MCF 10A (cell line): ENCODE measurements at regions of chr3 and their contacts with region 1.

Region 1: DNA sequence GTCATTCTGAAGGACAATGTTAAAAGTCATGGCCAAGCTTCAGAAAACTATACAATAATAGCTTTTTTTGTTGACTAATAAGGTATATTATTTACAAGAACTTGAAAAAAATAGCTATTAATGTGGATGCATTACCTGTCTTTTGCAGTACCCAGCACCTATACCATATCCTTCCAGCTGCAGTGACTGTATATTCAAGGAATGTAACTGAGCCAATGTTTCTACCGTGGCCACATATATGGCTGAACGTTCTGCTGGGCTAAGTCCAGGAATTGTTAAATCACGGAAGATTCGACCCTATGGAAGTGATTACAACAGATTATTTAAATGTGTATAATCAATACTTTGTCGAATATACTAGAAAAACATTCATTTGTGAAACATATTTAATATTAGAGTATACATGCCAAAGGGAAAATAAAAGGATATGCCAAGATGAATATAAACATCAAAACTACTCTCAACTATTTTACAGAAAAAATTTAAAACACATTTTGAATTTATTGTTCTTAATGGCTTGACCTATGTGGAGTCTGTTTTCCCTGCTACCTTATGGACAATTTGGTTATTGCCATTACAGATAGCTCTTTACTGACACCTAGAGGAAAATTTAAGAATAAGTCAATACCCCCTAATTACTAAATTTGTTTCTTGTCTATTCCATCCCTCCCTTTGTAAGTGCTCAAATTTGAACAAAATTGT is 17.6 kb downstream of the ACAD11 start:
- DNase-seq: peak; percentile 58
- H3K4me3 Mint-ChIP-seq: no peak overlapping the region
- H3K27ac Mint-ChIP-seq: no peak overlapping the region
- H3K4me1 Mint-ChIP-seq: peaks cover 11% of the 10 kb centered on the region
- H3K27me3 Mint-ChIP-seq: no peaks in the 10 kb centered on the region
- CTCF ChIP-seq: peak; percentile 54

Region 2: GRCh38 chr3:132256989-132257388 is 385.0 kb before region 1 on chr3:
- CTCF ChIA-PET with region 1: no interaction called
- POLR2A ChIA-PET with region 1: no interaction called
- intact Hi-C with region 1: no loop called
- DNase-seq: peak; percentile 50
- H3K4me3 Mint-ChIP-seq: no peak overlapping the region
- H3K27ac Mint-ChIP-seq: no peak overlapping the region
- H3K4me1 Mint-ChIP-seq: no peaks in the 10 kb centered on the region
- H3K27me3 Mint-ChIP-seq: no peaks in the 10 kb centered on the region
- CTCF ChIP-seq: peak; percentile 38

Region 3: DNA sequence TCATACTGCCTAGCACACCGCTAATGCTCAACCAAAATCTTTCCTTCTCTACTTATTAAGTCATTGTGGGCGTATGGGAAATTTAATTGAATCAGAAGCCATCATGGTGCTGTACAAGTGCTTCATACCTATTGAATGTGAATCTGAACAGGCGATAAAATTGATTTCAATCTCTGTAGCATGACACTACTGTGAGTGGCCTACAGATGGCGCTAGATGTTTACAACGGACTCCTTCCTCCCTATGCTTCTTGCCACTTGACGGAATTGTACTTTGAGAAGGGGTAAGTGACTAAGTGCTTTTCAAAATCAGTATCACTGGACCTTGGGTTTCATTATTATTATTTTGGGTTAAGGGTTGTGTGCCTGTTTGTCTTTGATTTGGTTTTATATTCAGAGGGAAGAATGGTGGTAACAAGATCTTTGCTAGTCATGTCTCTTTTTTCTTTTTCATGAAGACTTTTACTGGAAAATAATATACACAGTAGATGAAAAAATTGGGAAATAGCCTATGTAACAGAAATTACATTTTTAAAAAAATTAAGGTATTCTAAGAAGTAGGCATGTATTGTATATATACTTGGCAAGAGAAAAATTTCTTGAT is 289.3 kb before region 1 on chr3:
- CTCF ChIA-PET with region 1: interaction called, 6 read pairs
- POLR2A ChIA-PET with region 1: no interaction called
- intact Hi-C with region 1: loop called (anchors 2 kb)
- DNase-seq: peak; percentile 81
- H3K4me3 Mint-ChIP-seq: no peak overlapping the region
- H3K27ac Mint-ChIP-seq: no peak overlapping the region
- H3K4me1 Mint-ChIP-seq: peaks cover 6% of the 10 kb centered on the region
- H3K27me3 Mint-ChIP-seq: no peaks in the 10 kb centered on the region
- CTCF ChIP-seq: peak; percentile 90

Region 4: GRCh38 chr3:132486086-132486485 is 155.9 kb before region 1 on chr3:
- CTCF ChIA-PET with region 1: interaction called, 10 read pairs
- POLR2A ChIA-PET with region 1: no interaction called
- intact Hi-C with region 1: no loop called
- DNase-seq: peak; percentile 44
- H3K4me3 Mint-ChIP-seq: no peak overlapping the region
- H3K27ac Mint-ChIP-seq: no peak overlapping the region
- H3K4me1 Mint-ChIP-seq: peaks cover 9% of the 10 kb centered on the region
- H3K27me3 Mint-ChIP-seq: no peaks in the 10 kb centered on the region
- CTCF ChIP-seq: no peak

Region 5: GRCh38 chr3:132530624-132531023 is 111.4 kb before region 1 on chr3:
- CTCF ChIA-PET with region 1: interaction called, 284 read pairs
- POLR2A ChIA-PET with region 1: interaction called, 4 read pairs
- intact Hi-C with region 1: no loop called
- DNase-seq: no peak
- H3K4me3 Mint-ChIP-seq: no peak overlapping the region
- H3K27ac Mint-ChIP-seq: no peak overlapping the region
- H3K4me1 Mint-ChIP-seq: no peaks in the 10 kb centered on the region
- H3K27me3 Mint-ChIP-seq: no peaks in the 10 kb centered on the region
- CTCF ChIP-seq: no peak

Region 6: GRCh38 chr3:132545471-132545870 is 96.5 kb before region 1 on chr3:
- CTCF ChIA-PET with region 1: interaction called, 284 read pairs
- POLR2A ChIA-PET with region 1: interaction called, 3 read pairs
- intact Hi-C with region 1: no loop called
- DNase-seq: peak; percentile 67
- H3K4me3 Mint-ChIP-seq: no peak overlapping the region
- H3K27ac Mint-ChIP-seq: peak overlapping the region; percentile 46
- H3K4me1 Mint-ChIP-seq: peaks cover 29% of the 10 kb centered on the region
- H3K27me3 Mint-ChIP-seq: no peaks in the 10 kb centered on the region
- CTCF ChIP-seq: no peak

Region 7: GRCh38 chr3:132652640-132653270 is 10.8 kb after region 1 on chr3:
- CTCF ChIA-PET with region 1: interaction called, 17 read pairs
- POLR2A ChIA-PET with region 1: interaction called, 10 read pairs
- intact Hi-C with region 1: no loop called
- DNase-seq: no peak
- H3K4me3 Mint-ChIP-seq: no peak overlapping the region
- H3K27ac Mint-ChIP-seq: no peak overlapping the region
- H3K4me1 Mint-ChIP-seq: peaks cover 4% of the 10 kb centered on the region
- H3K27me3 Mint-ChIP-seq: no peaks in the 10 kb centered on the region
- CTCF ChIP-seq: no peak